ENCODE measurements at regions of chr2 and their contacts with region 1.

Region 1: GRCh38 chr2:106085181-106085940 is 108.7 kb downstream of the UXS1 start:
- DNase-seq: peak; percentile 9
- H3K4me3 ChIP-seq: no peak overlapping the region
- H3K27me3 ChIP-seq: peaks cover 4% of the 10 kb centered on the region
- CTCF ChIP-seq: peak; percentile 64

Region 2: GRCh38 chr2:105576440-105577252 is 508.7 kb before region 1 on chr2:
- CTCF ChIA-PET with region 1: interaction called, 16 read pairs
- POLR2A ChIA-PET with region 1: no interaction called
- DNase-seq: no peak
- H3K4me3 ChIP-seq: no peak overlapping the region
- H3K27me3 ChIP-seq: peaks cover 3% of the 10 kb centered on the region
- CTCF ChIP-seq: peak; percentile 45